ENCODE measurements at regions of chr13 and their contacts with region 1.

Region 1: DNA sequence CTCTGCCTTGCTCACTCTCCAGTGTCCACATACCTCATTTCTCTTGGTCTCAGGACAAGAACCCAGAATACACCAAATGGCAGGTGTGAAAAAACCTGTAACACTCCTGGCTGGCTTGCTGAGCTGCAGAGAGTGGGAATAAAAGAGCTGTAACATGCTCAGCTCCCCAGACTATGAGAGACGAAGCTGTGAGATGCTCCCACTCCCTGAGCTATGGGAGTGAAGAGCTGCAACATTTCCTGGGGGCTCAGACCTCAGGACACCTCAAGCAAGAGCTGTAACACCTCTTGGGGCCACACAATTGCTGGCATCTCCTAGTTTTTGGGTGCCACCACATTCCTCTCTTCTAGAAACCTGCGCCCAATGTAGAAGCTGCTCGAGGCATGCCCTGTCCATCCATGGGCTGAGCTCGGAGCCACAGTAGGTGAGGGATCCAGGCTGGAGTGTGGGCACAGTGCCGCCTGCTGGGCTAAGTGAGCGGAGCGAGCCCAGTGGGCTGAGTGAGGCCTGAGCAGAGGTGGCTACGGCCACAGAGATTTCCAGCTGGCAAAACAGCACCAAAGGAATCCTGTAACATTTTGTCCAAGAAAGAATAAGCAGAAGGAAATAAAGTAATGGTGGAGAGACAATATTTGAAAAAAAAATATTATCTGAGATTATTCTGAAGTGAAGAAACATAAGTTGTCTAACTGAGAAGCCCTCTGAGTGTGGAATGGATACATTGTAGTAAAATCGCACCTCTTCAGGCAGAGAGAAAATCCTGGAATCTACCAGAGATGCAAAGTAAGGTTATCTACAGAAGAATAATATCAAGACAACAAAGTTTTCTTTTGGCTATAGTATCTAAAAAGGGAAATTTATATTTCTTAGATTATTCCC is 186.2 kb upstream of the PCDH9 start:
- DNase-seq: no peak
- H3K4me3 ChIP-seq: no peak overlapping the region
- H3K27ac ChIP-seq: no peak overlapping the region
- H3K4me1 ChIP-seq: no peaks in the 10 kb centered on the region
- H3K27me3 ChIP-seq: no peaks in the 10 kb centered on the region
- CTCF ChIP-seq: no peak
- POLR2A ChIP-seq: no peak

Region 2: DNA sequence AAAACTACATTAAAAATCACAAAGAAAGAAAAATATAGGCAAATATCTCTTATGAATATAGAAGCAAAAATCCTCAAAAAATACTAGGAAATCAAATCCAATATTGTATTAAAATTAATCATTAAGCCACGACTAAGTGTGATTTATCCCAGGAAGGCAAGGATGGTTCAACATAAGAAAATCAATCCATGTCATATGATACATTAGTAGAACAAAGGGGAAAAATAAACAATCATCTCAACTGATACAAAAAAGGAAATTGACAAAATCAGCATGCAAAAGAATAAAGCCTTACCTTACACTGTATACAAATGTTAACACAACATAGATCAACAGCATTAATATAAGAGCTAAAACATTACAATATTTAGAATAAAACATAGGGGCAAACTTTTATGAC is 1119.4 kb before region 1 on chr13:
- intact Hi-C with region 1: loop called (anchors 10 kb)
- DNase-seq: no peak
- H3K4me3 ChIP-seq: no peak overlapping the region
- H3K27ac ChIP-seq: no peak overlapping the region
- H3K4me1 ChIP-seq: no peaks in the 10 kb centered on the region
- H3K27me3 ChIP-seq: no peaks in the 10 kb centered on the region
- CTCF ChIP-seq: no peak
- POLR2A ChIP-seq: no peak

Measured in vagina (tissue), 2 donors.